ENCODE measurements at regions of chr5 and their contacts with region 1.

Region 1: DNA sequence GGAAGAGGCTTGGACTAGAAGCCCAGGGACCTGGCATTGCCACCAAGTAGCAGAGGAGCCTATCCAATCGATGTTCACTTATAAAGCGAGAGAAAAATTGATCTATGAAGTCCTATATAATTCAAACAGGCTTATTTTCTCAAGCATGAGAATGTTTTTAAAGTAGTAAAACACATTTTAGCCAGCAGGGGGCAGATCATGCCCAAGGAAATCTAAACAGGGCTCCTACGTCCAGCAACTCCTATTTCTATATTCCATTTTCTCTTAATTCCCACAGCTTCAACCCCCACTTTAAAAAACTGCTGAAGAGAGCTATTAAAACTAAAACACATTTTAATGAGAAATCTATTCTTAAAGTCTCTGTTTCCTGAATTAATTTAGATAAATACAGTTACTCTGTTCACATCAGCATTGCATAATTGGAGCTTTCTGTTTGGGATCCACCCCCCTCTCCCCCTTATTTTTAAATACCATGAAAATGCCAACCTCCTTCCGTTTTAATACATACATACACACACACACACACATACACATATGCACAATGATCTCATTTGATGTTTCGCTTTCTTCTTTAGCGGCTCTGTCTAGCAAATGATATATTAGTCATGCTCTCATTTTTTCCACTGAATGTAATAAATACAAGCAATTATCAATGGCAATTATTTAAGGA is 144.9 kb downstream of the MYO10 start:
- DNase-seq: peak; percentile 55
- ATAC-seq: no peak
- H3K4me3 ChIP-seq: no peak overlapping the region
- H3K4me3 Mint-ChIP-seq: no peak overlapping the region
- H3K27ac ChIP-seq: no peak overlapping the region
- H3K27ac Mint-ChIP-seq: no peak overlapping the region
- H3K4me1 ChIP-seq: no peaks in the 10 kb centered on the region
- H3K4me1 Mint-ChIP-seq: no peaks in the 10 kb centered on the region
- H3K27me3 ChIP-seq: no peaks in the 10 kb centered on the region
- H3K27me3 Mint-ChIP-seq: peaks cover 2% of the 10 kb centered on the region
- CTCF ChIP-seq: peak; percentile 83

Region 2: GRCh38 chr5:16453609-16454008 is 337.6 kb before region 1 on chr5:
- CTCF ChIA-PET with region 1: no interaction called
- POLR2A ChIA-PET with region 1: no interaction called
- intact Hi-C with region 1: no loop called
- DNase-seq: no peak
- ATAC-seq: no peak
- H3K4me3 ChIP-seq: no peak overlapping the region
- H3K4me3 Mint-ChIP-seq: no peak overlapping the region
- H3K27ac ChIP-seq: no peak overlapping the region
- H3K27ac Mint-ChIP-seq: no peak overlapping the region
- H3K4me1 ChIP-seq: peaks cover 7 to 9% of the 10 kb centered on the region in 2 donors
- H3K4me1 Mint-ChIP-seq: peaks cover 29% of the 10 kb centered on the region
- H3K27me3 ChIP-seq: no peaks in the 10 kb centered on the region
- H3K27me3 Mint-ChIP-seq: no peaks in the 10 kb centered on the region
- CTCF ChIP-seq: no peak

Region 3: GRCh38 chr5:16827755-16828154 is 36.6 kb after region 1 on chr5:
- CTCF ChIA-PET with region 1: no interaction called
- POLR2A ChIA-PET with region 1: no interaction called
- intact Hi-C with region 1: no loop called
- DNase-seq: no peak
- ATAC-seq: no peak
- H3K4me3 ChIP-seq: no peak overlapping the region
- H3K4me3 Mint-ChIP-seq: no peak overlapping the region
- H3K27ac ChIP-seq: no peak overlapping the region
- H3K27ac Mint-ChIP-seq: no peak overlapping the region
- H3K4me1 ChIP-seq: no peaks in the 10 kb centered on the region
- H3K4me1 Mint-ChIP-seq: no peaks in the 10 kb centered on the region
- H3K27me3 ChIP-seq: no peaks in the 10 kb centered on the region
- H3K27me3 Mint-ChIP-seq: no peaks in the 10 kb centered on the region
- CTCF ChIP-seq: no peak

Region 4: DNA sequence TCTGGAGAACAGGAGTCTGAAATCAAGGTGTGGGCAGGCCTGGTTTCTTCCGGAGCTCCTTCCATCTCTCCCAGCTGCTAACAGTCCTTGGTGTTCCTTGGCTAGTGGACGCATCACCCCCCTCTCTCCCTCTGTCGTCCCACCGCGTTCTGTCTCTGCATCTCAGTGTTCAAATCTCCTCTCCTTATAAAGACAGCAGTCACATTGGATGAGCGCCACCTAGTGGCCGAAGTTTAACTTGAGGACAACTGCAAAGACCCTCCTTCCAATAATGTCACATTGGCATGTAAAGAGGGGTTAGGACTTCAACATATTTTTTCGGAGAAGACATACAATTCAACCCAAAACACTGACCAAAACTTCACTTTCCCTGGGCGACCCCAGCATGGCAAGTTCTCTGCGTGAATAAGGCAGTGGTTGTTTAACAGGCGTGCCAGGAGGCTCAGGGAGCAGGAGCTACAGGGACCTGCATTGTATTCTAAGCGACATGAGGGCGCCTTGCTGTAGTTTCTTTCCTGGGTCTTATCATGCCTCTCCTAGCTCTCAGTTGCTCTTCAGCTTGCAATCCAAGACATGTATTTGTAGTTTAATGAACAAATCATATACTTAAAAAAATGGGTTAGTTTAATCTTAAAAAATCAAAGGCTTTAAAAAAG is 398.3 kb after region 1 on chr5:
- CTCF ChIA-PET with region 1: interaction called, 23 read pairs
- POLR2A ChIA-PET with region 1: no interaction called
- intact Hi-C with region 1: loop called (anchors 1 kb)
- DNase-seq: peak; percentile 74
- ATAC-seq: no peak
- H3K4me3 ChIP-seq: no peak overlapping the region
- H3K4me3 Mint-ChIP-seq: no peak overlapping the region
- H3K27ac ChIP-seq: no peak overlapping the region
- H3K27ac Mint-ChIP-seq: no peak overlapping the region
- H3K4me1 ChIP-seq: no peaks in the 10 kb centered on the region
- H3K4me1 Mint-ChIP-seq: peaks cover 4% of the 10 kb centered on the region
- H3K27me3 ChIP-seq: no peaks in the 10 kb centered on the region
- H3K27me3 Mint-ChIP-seq: peaks cover 6% of the 10 kb centered on the region
- CTCF ChIP-seq: peak; percentile 87